ENCODE measurements at regions of chr7 and their contacts with region 1.

Region 1: GRCh38 chr7:151503902-151504714 is 15.6 kb downstream of the RHEB start:
- DNase-seq: no peak
- H3K4me3 ChIP-seq: no peak overlapping the region
- H3K27ac ChIP-seq: no peak overlapping the region
- H3K4me1 ChIP-seq: peaks cover 6 to 17% (median 13%) of the 10 kb centered on the region in 4 experiments
- H3K27me3 ChIP-seq: no peaks in the 10 kb centered on the region
- CTCF ChIP-seq: no peak
- EP300 ChIP-seq: no peak
- POLR2A ChIP-seq: no peak
- RAD21 ChIP-seq: no peak

Region 2: GRCh38 chr7:151519765-151520418 is 15.8 kb after region 1 on chr7 and contains the start of gene RHEB:
- CTCF ChIA-PET with region 1: interaction called, 6 read pairs
- POLR2A ChIA-PET with region 1: interaction called, 42 read pairs
- DNase-seq: peak; percentile 96 to 97
- H3K4me3 ChIP-seq: peak within 1 kb of the TSS; percentile 96 to 98 (median 97)
- H3K27ac ChIP-seq: peak within 1 kb of the TSS; percentile 97
- H3K4me1 ChIP-seq: peaks cover 2 to 11% (median 6%) of the 10 kb centered on the region in 4 experiments; a peak in 4 of 7 replicates
- H3K27me3 ChIP-seq: peaks cover 0 to 5% (median 4%) of the 10 kb centered on the region in 4 experiments; a peak in 2 of 7 replicates
- CTCF ChIP-seq: no peak
- EP300 ChIP-seq: no peak
- POLR2A ChIP-seq: no peak; a peak in 1 of 3 replicates
- RAD21 ChIP-seq: no peak
- total RNA-seq, gene RHEB: 119 and 132 TPM in 2 replicates

Measured in H1 (cell line).